ENCODE measurements at regions of chr7 and their contacts with region 1.

Region 1: DNA sequence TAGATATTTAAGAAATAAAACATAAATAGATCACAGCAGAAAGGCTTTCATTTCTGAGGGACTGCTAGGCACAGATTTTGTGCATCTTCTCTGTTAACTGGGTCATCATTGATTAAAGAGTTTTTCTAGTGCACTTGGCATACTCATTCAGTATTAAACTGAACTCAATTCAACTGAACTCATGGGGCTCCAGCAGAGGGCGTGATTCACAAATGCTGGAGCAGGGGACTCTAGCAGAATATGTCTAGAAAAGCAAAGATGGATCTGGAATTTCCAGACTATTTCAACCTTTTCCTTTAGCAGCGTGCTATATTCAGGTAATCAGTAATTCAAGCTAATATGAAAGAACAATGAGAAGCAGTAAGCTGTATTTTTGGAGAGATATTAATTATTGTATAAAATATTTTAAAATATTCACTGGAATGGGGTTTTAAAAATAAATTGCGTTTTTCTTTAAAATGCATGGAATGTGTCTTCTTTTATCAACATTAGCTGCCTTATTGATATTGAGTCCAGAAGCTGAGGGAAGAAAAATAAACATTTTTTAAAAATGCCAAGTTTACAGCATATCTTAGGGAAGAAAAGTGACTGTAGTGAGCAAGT is 296.8 kb upstream of the CACNA2D1 start:
- DNase-seq: peak; percentile 40
- H3K4me3 ChIP-seq: no peak overlapping the region
- H3K27ac ChIP-seq: no peak overlapping the region
- H3K4me1 ChIP-seq: no peaks in the 10 kb centered on the region
- H3K27me3 ChIP-seq: no peaks in the 10 kb centered on the region
- CTCF ChIP-seq: peak; percentile 77 to 82

Region 2: DNA sequence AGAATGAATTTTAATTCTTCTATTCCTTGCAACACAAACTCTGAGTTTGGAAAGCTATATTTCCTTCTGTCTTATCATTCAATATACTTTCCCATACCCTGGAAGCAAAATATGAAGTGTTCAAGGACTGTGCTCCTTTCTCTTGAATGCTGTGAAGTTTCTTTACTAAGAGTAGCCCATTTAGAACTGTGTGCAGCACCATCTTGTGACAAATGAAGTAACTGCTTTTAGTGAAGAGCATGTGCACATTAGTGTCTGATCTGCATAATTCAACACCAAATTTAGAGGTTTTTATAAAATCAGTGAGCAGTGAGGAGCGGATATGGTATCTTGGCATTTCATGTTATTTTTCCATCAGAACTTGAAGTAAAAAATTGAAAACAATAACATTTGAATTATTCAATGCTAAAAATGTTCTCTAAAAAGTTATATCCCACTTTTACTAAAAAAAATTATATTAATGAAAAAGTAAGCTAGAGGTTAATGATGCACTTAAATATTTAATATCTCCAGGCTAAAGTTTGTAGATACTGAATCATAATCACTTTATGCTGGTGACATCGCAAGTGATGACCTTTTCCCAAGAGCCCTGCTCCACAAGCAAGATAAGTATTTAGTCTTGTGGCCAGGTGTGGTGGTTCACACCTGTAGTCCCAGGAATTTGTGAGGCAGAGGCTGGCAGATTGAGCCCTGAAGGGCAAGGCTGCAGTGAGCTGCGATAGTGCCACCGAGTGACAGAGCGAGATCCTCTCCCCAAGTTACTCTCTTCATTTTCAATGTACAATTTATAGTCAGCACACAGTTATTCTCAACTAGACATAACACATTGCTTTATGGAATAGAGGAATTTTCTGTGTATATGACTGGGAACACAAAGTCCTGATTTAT is 531.1 kb after region 1 on chr7:
- CTCF ChIA-PET with region 1: no interaction called
- dilution Hi-C with region 1: no loop called
- in situ Hi-C with region 1: loop called (anchors 10 kb)
- intact Hi-C with region 1: loop called (anchors 1 kb)
- DNase-seq: peak; percentile 22
- H3K4me3 ChIP-seq: no peak overlapping the region
- H3K27ac ChIP-seq: no peak overlapping the region
- H3K4me1 ChIP-seq: no peaks in the 10 kb centered on the region
- H3K27me3 ChIP-seq: no peaks in the 10 kb centered on the region
- CTCF ChIP-seq: peak; percentile 48 to 74

Region 3: DNA sequence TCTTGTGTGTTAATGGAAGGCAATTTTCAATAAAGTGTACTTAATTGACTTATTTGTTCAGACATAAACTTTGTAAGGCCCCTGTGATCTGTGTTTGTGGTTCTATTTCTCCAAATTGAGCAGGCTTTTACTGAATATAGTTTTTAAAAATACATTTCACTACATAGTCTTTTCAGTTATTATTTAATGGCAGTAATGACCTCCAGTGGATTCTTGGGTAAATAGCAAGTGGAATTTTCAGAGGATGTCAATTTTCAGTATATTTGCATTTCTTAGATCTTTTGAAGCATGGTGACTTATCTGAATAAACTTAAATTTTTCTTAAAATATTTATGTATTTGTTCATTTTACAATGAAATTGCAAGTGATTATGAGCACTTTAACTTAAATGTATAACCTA is 625.4 kb after region 1 on chr7:
- CTCF ChIA-PET with region 1: no interaction called
- dilution Hi-C with region 1: no loop called
- in situ Hi-C with region 1: no loop called
- intact Hi-C with region 1: loop called (anchors 10 kb)
- DNase-seq: no peak
- H3K4me3 ChIP-seq: no peak overlapping the region
- H3K27ac ChIP-seq: no peak overlapping the region
- H3K4me1 ChIP-seq: no peaks in the 10 kb centered on the region
- H3K27me3 ChIP-seq: peaks cover 4% of the 10 kb centered on the region
- CTCF ChIP-seq: peak in 1 of 2 donors; percentile 35

Region 4: DNA sequence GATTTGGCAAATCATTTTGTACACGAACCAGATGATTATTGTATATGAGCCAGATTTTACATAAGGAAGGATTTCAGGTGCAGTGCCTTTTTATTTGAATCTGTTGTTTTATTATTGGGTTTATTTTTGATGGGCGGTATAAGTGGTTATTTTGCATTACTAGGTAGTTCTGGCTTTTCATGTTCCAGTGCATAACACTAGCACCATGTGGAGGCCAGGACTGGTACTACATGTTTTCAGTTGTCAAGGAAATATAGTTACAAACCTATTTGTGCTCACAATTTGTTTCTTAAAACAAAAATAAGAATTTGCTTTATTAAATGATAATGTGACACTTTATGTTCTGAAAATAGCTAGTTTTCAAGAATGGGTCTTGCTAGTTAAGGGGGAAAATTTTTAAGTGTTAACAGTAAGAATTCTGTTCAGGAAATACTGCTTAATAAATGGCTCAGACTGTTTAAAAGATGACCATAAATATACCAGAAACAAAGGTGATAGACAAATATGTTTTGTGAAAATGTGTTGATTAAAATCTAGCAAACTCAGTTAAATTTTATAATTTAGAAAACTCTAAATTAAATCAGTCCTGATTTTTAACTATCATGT is 915.7 kb after region 1 on chr7:
- CTCF ChIA-PET with region 1: no interaction called
- dilution Hi-C with region 1: no loop called
- in situ Hi-C with region 1: no loop called
- intact Hi-C with region 1: loop called (anchors 2 kb)
- DNase-seq: peak; percentile 32
- H3K4me3 ChIP-seq: no peak overlapping the region
- H3K27ac ChIP-seq: no peak overlapping the region
- H3K4me1 ChIP-seq: no peaks in the 10 kb centered on the region
- H3K27me3 ChIP-seq: no peaks in the 10 kb centered on the region
- CTCF ChIP-seq: peak; percentile 92 to 95